B cell (primary cell): ENCODE measurements at regions of chr12 and their contacts with region 1.

Region 1: GRCh38 chr12:52327052-52327829 is 6.0 kb upstream of the KRT83 start:
- DNase-seq: peak; percentile 72
- ATAC-seq: peak; percentile 81
- H3K4me3 ChIP-seq: no peak overlapping the region
- H3K4me3 Mint-ChIP-seq: no peak overlapping the region
- H3K27ac ChIP-seq: no peak overlapping the region
- H3K27ac Mint-ChIP-seq: no peak overlapping the region
- H3K4me1 ChIP-seq: peaks cover 0 to 3% of the 10 kb centered on the region in 2 donors
- H3K4me1 Mint-ChIP-seq: peaks cover 4% of the 10 kb centered on the region
- H3K27me3 ChIP-seq: peaks cover 0 to 22% (median 4%) of the 10 kb centered on the region in 4 experiments
- H3K27me3 Mint-ChIP-seq: peaks cover 29% of the 10 kb centered on the region
- CTCF ChIP-seq: peak; percentile 81

Region 2: DNA sequence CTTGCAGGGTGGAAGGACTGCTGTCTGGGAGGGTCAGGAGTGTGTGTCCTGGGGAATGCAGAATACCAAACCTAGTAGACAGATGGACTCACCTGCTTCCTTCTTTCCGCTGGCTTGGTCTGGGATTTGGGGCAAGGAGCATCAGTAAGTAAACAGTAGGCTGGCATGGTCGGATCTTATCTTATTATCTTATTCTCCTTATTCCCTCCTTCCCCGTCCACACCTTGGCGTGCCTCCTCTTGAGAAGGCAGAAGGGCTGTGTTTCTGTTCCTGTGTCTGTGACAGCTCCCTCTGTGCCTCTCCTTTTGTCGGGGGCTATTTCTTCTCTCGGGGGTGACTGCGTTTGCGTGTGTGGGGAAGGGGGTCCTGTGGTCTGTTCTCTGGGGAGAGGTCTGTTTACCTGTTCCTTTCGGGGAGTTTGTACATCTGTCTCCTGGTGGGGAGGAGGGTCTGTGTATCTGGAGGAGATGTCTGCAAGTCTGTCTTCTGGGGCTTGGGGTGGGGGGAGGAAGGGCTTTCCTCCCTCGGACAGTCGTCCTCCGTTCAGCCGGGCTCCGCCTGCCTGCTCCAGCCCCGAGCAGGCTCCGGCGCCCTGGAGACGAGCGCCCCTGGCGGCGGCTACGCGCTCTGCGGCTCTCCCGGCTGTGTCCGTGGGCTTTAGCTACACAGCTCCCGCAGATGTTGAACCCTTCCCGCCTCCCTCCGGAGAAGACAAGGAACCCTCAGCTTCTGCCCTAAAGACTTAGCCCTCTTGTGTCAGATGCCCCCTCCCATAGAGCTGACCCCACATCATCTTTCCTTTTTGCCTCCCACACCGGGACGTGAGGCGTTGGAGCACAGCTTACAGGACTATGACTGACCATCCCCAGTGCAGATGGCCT is 48.5 kb before region 1 on chr12:
- CTCF ChIA-PET with region 1: interaction called, 11 read pairs
- POLR2A ChIA-PET with region 1: no interaction called
- intact Hi-C with region 1: no loop called
- DNase-seq: peak; percentile 64
- ATAC-seq: peak; percentile 81
- H3K4me3 ChIP-seq: no peak overlapping the region
- H3K4me3 Mint-ChIP-seq: no peak overlapping the region
- H3K27ac ChIP-seq: no peak overlapping the region
- H3K27ac Mint-ChIP-seq: no peak overlapping the region
- H3K4me1 ChIP-seq: peaks cover 4% of the 10 kb centered on the region in 2 donors
- H3K4me1 Mint-ChIP-seq: peaks cover 6% of the 10 kb centered on the region
- H3K27me3 ChIP-seq: peaks cover 0 to 29% (median 5%) of the 10 kb centered on the region in 4 experiments
- H3K27me3 Mint-ChIP-seq: peaks cover 61% of the 10 kb centered on the region
- CTCF ChIP-seq: peak; percentile 93

Region 3: GRCh38 chr12:52358575-52359350 is 31.5 kb after region 1 on chr12:
- CTCF ChIA-PET with region 1: interaction called, 3 read pairs
- POLR2A ChIA-PET with region 1: no interaction called
- intact Hi-C with region 1: loop called (anchors 1 kb)
- DNase-seq: peak; percentile 59
- ATAC-seq: peak; percentile 90
- H3K4me3 ChIP-seq: no peak overlapping the region
- H3K4me3 Mint-ChIP-seq: peak overlapping the region; percentile 57
- H3K27ac ChIP-seq: no peak overlapping the region
- H3K27ac Mint-ChIP-seq: peak overlapping the region; percentile 32
- H3K4me1 ChIP-seq: peaks cover 20 to 21% of the 10 kb centered on the region in 2 donors
- H3K4me1 Mint-ChIP-seq: peaks cover 27% of the 10 kb centered on the region
- H3K27me3 ChIP-seq: no peaks in the 10 kb centered on the region
- H3K27me3 Mint-ChIP-seq: peaks cover 15% of the 10 kb centered on the region
- CTCF ChIP-seq: no peak

Region 4: GRCh38 chr12:52667511-52667910 is 340.3 kb after region 1 on chr12:
- CTCF ChIA-PET with region 1: no interaction called
- POLR2A ChIA-PET with region 1: no interaction called
- intact Hi-C with region 1: no loop called
- DNase-seq: no peak
- ATAC-seq: no peak
- H3K4me3 ChIP-seq: no peak overlapping the region
- H3K4me3 Mint-ChIP-seq: no peak overlapping the region
- H3K27ac ChIP-seq: no peak overlapping the region
- H3K27ac Mint-ChIP-seq: no peak overlapping the region
- H3K4me1 ChIP-seq: no peaks in the 10 kb centered on the region
- H3K4me1 Mint-ChIP-seq: no peaks in the 10 kb centered on the region
- H3K27me3 ChIP-seq: peaks cover 0 to 5% (median 0%) of the 10 kb centered on the region in 4 experiments
- H3K27me3 Mint-ChIP-seq: peaks cover 21% of the 10 kb centered on the region
- CTCF ChIP-seq: no peak

Region 5: GRCh38 chr12:52821826-52822660 is 494.8 kb after region 1 on chr12:
- CTCF ChIA-PET with region 1: no interaction called
- POLR2A ChIA-PET with region 1: no interaction called
- intact Hi-C with region 1: no loop called
- DNase-seq: no peak
- ATAC-seq: no peak
- H3K4me3 ChIP-seq: no peak overlapping the region
- H3K4me3 Mint-ChIP-seq: no peak overlapping the region
- H3K27ac ChIP-seq: no peak overlapping the region
- H3K27ac Mint-ChIP-seq: no peak overlapping the region
- H3K4me1 ChIP-seq: no peaks in the 10 kb centered on the region
- H3K4me1 Mint-ChIP-seq: no peaks in the 10 kb centered on the region
- H3K27me3 ChIP-seq: peaks cover 0 to 6% (median 0%) of the 10 kb centered on the region in 4 experiments
- H3K27me3 Mint-ChIP-seq: peaks cover 41% of the 10 kb centered on the region
- CTCF ChIP-seq: no peak